Dendritic cell treated with granulocyte-macrophage colony-stimulating factor and Interleukin-4, amounts not matched to agents 40 ng/mL and 50 ng/mL, for 4 days (primary cell): ENCODE measurements at regions of chr1 and their contacts with region 1.

Region 1: GRCh38 chr1:31422505-31423319 is 9.7 kb downstream of the SERINC2 start:
- H3K4me3 Mint-ChIP-seq: no peak overlapping the region
- H3K27ac Mint-ChIP-seq: no peak overlapping the region
- H3K4me1 Mint-ChIP-seq: peaks cover 9% of the 10 kb centered on the region
- H3K27me3 Mint-ChIP-seq: peaks cover 21% of the 10 kb centered on the region

Region 2: DNA sequence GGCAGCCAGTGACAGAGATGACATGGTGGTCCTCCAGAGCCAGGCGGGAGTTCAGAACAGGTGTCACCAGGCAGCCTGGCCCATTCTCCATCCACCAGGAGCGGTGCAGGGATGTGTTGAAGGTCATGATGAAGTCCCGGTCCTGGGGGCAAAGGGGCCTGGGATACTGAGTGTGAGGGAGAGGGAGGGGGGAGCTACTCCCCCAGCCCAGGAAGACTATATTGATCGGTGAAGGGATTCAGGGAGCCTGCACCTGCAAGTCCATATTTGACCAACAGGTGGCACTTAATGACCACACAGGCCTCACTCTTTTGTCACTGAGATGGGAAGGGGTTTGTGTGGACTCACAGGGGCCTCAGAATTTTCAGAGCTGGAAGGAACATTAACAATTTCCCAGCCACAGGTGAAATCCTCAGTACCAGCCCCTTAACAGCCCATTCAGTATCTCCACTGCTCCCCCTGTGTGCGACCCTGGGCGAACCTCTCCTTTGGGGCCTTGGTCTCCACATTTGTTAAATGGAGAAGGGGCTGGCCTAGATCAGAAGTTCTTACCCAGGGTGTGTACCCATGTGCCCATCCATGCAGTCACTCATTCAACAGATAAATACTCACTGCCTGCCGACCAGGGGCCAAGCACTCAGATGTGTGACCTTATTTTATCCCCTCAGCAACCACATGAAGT is 238.7 kb before region 1 on chr1:
- intact Hi-C with region 1: loop called (anchors 1 kb)
- H3K4me3 Mint-ChIP-seq: no peak overlapping the region
- H3K27ac Mint-ChIP-seq: no peak overlapping the region
- H3K4me1 Mint-ChIP-seq: peaks cover 16% of the 10 kb centered on the region
- H3K27me3 Mint-ChIP-seq: peaks cover 47% of the 10 kb centered on the region

Region 3: DNA sequence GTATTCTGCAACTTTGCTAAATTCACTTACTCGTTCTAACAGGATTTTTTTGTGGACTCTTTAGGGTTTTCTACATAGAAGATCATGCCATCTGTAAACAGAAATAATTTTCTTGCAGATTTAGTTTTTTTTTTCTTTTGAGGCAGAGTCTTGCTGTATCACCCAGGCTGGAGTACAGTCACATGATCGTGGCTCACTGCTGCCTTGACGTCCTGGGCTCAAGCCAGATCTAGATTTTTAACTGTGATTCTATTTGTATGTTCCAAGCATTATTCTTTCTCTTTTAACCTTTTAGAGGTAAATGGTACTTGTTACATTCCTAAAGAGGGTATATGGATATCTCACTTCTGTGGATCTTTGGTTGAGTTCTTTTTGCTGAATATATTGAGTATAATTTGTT is 68.4 kb before region 1 on chr1:
- intact Hi-C with region 1: no loop called
- H3K4me3 Mint-ChIP-seq: no peak overlapping the region
- H3K27ac Mint-ChIP-seq: no peak overlapping the region
- H3K4me1 Mint-ChIP-seq: no peaks in the 10 kb centered on the region
- H3K27me3 Mint-ChIP-seq: no peaks in the 10 kb centered on the region

Region 4: DNA sequence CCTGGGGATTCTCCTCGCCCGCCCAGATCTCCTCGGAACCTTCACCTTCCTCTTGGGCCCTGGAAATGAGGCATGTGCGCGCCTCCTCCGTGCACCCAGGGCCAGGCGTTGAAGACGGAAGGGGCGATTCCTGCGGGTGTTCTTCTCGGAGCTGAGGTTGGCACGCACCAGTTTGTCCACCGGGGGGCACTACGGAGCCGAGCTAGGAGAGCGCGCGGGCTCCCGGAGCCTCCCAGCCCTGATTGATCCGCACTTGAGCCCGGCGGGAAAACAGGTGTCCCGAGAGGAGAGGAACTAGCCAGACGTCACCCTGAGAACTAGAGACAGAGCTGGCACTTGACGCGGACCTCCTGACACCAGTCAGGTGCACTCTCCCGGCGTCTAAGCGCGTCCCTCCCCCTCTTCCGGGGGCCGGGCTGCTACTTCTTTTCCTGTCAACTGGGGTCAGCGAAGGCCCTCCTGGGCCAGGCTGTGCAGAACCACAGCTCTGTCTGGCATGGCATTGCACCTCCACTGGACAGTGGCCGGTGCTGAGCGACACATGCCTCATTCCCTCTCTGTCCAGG is 28.0 kb before region 1 on chr1:
- intact Hi-C with region 1: loop called (anchors 1 kb)
- H3K4me3 Mint-ChIP-seq: peak overlapping the region; percentile 71
- H3K27ac Mint-ChIP-seq: no peak overlapping the region
- H3K4me1 Mint-ChIP-seq: peaks cover 32% of the 10 kb centered on the region
- H3K27me3 Mint-ChIP-seq: peaks cover 5% of the 10 kb centered on the region

Region 5: DNA sequence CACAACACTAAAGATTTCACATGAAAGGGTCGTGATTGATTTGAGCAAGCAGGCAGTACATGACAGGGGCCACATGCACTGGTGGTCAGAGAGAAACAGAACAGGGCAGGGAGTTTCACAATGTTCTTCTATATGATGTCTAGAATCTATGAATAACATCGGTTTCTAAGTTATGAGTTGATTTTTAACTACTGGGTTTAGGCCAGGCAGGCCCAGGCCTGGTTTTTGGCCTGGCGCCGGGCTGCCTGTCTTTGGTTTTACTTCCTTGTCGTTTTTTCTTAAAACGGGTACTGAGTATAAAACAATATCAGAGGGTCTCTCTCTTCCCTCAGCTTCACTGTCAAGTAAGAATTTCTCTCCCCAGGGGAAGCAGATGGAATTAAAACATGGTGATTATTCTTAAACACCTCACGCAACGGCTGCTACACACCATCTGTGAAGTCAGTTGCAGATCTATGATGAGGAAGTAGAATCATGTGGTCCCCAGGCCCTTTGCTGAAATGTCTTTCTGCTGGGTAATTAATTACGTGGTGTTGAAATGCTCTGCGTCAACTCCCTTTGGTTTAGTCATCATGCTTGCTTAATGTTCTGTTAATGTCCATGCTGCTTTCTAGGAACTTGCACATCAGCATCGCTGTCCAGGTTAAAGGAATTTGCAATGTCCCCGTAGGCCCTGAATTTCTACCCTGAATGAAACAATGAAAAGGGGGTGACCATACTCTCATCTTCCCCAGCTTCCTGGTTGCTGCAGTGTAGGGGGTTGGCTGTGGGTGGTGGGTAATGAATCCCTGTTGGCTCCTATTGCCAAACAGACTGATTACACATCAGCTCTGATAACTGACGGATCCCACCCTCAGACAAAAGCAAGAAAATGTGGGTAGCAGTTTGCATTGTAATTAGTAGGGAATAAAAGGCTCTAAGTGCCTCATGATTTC is 60.6 kb after region 1 on chr1:
- intact Hi-C with region 1: no loop called
- H3K4me3 Mint-ChIP-seq: no peak overlapping the region
- H3K27ac Mint-ChIP-seq: peak overlapping the region; percentile 97
- H3K4me1 Mint-ChIP-seq: peaks cover 49% of the 10 kb centered on the region
- H3K27me3 Mint-ChIP-seq: no peaks in the 10 kb centered on the region